ENCODE measurements at regions of chrX and their contacts with region 1.

Region 1: GRCh38 chrX:155216179-155216939 is at the start of gene VBP1:
- DNase-seq: peak; percentile 84
- H3K4me3 Mint-ChIP-seq: peak within 1 kb of the TSS; percentile 96
- H3K27ac Mint-ChIP-seq: peak within 1 kb of the TSS; percentile 93
- H3K4me1 Mint-ChIP-seq: peaks cover 20% of the 10 kb centered on the region
- H3K27me3 Mint-ChIP-seq: no peaks in the 10 kb centered on the region
- total RNA-seq, gene VBP1: 73.0 and 74.6 TPM in 2 replicates

Region 2: GRCh38 chrX:154980330-154981096 is 235.8 kb before region 1 on chrX:
- intact Hi-C with region 1: loop called (anchors 2 kb)
- DNase-seq: peak; percentile 67
- H3K4me3 Mint-ChIP-seq: peak overlapping the region; percentile 79
- H3K27ac Mint-ChIP-seq: peak overlapping the region; percentile 72
- H3K4me1 Mint-ChIP-seq: peaks cover 15% of the 10 kb centered on the region
- H3K27me3 Mint-ChIP-seq: peaks cover under 1% of the 10 kb centered on the region

Region 3: DNA sequence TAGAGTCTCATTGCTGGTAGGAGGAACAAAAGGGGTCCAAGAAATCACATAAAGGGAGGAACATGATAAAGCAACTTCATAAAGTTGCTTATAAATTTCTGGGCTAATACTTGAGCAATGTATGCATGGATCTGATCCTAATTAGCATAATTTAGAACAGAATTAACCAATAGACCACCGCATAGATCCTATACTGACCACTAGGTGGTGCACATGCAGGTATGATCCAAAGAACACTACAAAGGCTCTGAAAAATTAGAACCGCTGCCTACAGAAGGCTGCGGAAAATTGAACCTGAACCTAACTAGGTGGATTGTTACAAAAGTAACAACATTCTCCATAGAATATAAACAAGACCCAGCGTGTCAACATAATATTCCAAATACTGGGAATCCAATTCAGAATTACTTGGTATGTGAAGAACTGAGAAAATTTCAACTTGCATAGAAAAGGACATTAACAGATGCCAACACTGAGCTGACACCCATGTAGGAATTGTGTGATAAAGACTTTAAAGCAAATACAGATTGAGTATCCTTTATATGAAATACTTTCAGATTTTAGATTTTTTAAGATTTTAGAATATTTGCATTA is 121.8 kb before region 1 on chrX:
- intact Hi-C with region 1: loop called (anchors 5 kb)
- DNase-seq: peak; percentile 4
- H3K4me3 Mint-ChIP-seq: no peak overlapping the region
- H3K27ac Mint-ChIP-seq: no peak overlapping the region
- H3K4me1 Mint-ChIP-seq: no peaks in the 10 kb centered on the region
- H3K27me3 Mint-ChIP-seq: no peaks in the 10 kb centered on the region

Region 4: GRCh38 chrX:155263854-155264628 is 47.7 kb after region 1 on chrX and contains the start of gene RAB39B:
- intact Hi-C with region 1: loop called (anchors 1 kb)
- DNase-seq: peak; percentile 61
- H3K4me3 Mint-ChIP-seq: peak within 1 kb of the TSS; percentile 91
- H3K27ac Mint-ChIP-seq: peak within 1 kb of the TSS; percentile 57
- H3K4me1 Mint-ChIP-seq: peaks cover 22% of the 10 kb centered on the region
- H3K27me3 Mint-ChIP-seq: no peaks in the 10 kb centered on the region
- total RNA-seq, gene RAB39B: 11.4 and 12.5 TPM in 2 replicates

Region 5: DNA sequence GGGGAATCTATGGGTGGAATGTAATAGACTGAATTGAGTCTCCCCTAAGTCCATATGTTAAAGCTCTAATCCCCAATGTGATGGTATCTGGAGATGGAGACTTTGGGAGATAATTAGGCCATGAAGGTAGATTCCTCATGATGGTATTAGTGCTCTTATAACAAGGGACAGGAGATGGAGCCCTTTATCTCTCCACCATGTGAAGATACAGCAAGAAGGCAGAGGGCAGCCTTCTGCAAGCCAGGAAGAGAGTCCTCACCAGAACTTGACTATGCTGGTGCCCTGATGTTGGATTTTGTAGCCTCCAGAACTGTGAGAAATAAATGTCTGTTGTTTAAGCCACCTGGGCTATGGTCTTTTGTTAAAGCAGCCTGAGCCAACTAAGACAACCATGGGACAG is 318.4 kb after region 1 on chrX:
- intact Hi-C with region 1: no loop called
- DNase-seq: no peak
- H3K4me3 Mint-ChIP-seq: no peak overlapping the region
- H3K27ac Mint-ChIP-seq: no peak overlapping the region
- H3K4me1 Mint-ChIP-seq: no peaks in the 10 kb centered on the region
- H3K27me3 Mint-ChIP-seq: no peaks in the 10 kb centered on the region

Region 6: DNA sequence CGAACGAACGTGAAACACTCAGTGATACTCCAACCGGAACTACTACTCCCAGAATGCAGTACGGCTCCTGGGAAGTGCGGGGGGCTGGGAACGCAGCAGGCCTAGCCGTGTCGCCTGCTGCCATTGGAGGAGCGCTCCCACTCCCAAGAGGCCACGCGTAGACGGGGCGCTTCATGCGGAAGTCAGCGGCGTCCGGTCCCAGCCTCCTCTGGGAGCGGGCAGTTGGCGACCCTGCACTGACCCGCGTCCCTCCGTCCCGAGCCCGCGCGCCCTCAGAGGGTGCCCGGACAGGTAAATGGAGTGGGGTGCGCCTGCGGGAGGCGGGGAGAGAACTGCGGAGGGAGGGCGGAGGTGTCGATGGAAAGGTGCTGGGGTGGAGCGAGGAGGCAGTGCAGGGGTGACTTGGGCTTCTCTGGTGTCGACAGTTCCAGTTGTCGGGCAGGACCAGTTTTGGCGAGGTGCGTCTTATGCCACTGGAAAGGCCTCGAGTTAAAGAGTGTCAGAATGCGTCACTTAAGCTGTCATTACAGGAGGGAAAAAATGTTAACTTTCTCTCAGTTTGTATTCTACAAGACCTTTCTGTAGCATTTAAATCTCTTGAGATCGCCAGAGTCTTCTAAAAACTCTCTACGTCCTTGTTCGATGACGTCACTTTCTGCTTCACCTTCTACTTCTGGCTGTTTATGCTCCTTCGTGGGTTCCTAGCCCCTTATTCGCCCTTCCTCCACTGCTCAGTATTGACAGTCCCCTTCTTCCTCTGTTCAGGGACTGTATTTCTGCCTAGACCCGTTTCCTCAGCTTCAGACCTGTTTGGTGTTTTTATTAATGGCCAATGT is 665.0 kb after region 1 on chrX and contains the start of gene VAMP7:
- intact Hi-C with region 1: loop called (anchors 2 kb)
- DNase-seq: peak; percentile 74
- H3K4me3 Mint-ChIP-seq: peak within 1 kb of the TSS; percentile 92
- H3K27ac Mint-ChIP-seq: peak within 1 kb of the TSS; percentile 87
- H3K4me1 Mint-ChIP-seq: peaks cover 20% of the 10 kb centered on the region
- H3K27me3 Mint-ChIP-seq: no peaks in the 10 kb centered on the region
- total RNA-seq, gene VAMP7: 27.4 and 32.8 TPM in 2 replicates